Thyroid gland (tissue), 4 donors: ENCODE measurements at regions of chr12 and their contacts with region 1.

Region 1: GRCh38 chr12:125185740-125186470 is 120.7 kb downstream of the AACS start:
- DNase-seq: peak; percentile 84 to 86
- H3K4me3 ChIP-seq: peak within 1 kb of the TSS in 2 of 3 donors; percentile 7 to 37
- H3K27ac ChIP-seq: no peak within 1 kb of the TSS
- H3K4me1 ChIP-seq: peaks cover 10 to 20% of the 10 kb centered on the region in 2 donors
- H3K27me3 ChIP-seq: no peaks in the 10 kb centered on the region
- CTCF ChIP-seq: peak in 3 of 6 experiments; percentile 42 to 76 (median 66)
- POLR2A ChIP-seq: peak in 1 of 2 donors; percentile 71

Region 2: DNA sequence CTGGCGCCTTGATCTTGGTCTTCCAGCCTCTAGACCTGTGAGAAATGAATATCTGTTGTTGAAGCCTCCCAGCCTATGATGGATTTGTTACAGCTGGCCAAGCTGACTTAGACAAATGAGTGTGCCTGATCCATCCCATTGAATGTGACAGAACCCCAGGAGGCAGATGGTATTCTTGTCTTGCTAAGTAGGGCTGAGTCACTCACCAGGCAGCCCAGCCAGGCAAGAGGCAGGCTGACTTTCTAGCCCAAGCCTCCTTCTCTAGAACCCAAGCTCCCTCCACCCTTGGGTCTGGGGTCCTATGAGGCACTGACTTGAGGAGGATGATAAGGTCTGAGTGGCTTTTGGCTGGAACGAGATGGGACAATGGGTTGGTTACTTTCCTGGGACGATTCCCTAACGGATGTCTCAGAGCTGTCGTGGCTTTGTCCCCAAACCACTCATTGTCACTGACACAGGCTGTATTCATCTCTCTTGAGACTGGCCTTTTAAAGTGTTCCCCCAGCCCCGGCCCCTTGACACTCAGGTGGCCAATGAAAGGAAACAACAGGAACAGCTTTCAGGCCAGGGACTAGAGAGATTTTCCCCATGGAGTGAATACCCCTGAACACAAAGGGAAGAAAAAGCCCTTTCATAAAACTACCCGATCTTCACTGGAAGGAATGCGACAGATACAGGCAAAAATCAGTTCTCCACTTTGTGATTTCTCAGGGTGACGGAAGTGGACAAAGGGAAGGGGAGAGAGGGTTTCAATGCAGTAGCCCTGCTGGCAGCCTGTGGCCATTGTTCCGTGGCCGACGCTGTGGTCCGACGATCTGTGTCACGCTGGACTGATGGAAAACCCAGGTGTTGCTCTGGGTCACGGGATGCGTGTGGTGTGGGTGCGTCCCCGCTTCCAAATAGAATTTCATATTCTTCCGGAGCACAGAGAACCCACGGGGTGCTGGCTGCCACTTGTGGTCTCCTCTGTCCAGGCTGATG is 143.6 kb after region 1 on chr12:
- intact Hi-C with region 1: loop called (anchors 5 kb)
- DNase-seq: no peak
- H3K4me3 ChIP-seq: no peak overlapping the region
- H3K27ac ChIP-seq: no peak overlapping the region
- H3K4me1 ChIP-seq: peaks cover 0 to 7% of the 10 kb centered on the region in 2 donors
- H3K27me3 ChIP-seq: no peaks in the 10 kb centered on the region
- CTCF ChIP-seq: no peak
- POLR2A ChIP-seq: no peak